ENCODE measurements at regions of chr16 and their contacts with region 1.

Region 1: DNA sequence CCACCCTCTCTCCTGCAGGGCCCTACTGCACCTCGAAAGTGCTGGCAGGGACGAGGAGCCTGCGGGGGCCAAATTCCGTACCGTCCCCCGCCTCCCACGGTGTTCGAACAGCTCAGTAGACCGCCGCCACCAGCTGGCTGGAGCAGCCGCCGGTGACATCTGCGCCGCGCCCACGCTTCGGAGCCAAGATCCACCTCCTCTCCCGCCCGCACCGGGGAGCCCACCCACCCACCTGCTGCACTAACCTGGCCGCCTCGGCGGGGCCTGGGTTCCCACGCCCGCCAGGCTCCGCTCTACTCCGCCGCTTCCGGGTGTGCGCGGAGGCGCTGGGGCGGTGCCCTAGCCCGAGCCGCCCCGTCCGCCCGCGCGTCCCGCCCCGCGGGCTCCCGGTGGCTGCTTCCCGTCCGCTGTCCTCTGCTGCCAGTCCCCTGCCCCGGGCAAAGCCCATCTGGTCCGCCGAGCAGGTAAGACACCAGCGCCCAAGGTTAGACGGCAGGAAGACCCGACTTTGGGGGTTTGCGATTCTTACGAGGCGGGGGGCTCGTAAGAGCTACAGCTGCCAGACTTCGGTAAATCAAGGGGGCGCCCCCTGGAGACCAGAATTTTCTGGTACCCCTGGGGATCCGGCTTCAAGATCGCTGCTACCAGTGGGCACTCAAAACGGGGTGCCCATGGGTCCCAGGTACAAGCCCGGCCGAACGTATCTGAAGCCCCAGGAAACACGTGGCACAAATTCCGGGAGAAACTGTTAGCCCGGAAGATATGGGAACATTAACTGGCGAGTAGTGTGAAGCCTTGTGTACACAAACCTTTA is at the starts of genes FBXL8 and TRADD:
- DNase-seq: peak; percentile 86
- H3K4me3 ChIP-seq: peak within 1 kb of the TSS; percentile 68 to 92 (median 75)
- H3K27ac ChIP-seq: peak within 1 kb of the TSS; percentile 77 to 79 (median 78)
- H3K4me1 ChIP-seq: peaks cover 0 to 69% (median 67%) of the 10 kb centered on the region in 4 donors
- H3K27me3 ChIP-seq: peaks cover 20 to 50% (median 34%) of the 10 kb centered on the region in 3 donors
- CTCF ChIP-seq: peak in 1 of 4 experiments; percentile 15
- EP300 ChIP-seq: no peak
- POLR2A ChIP-seq: peak; percentile 12 to 16
- total RNA-seq, gene FBXL8: 7.5 to 11.8 (median 9.7) TPM
- total RNA-seq, gene TRADD: 16.1 to 23.2 (median 19.6) TPM

Region 2: GRCh38 chr16:66894948-66895688 is 264.7 kb before region 1 on chr16:
- intact Hi-C with region 1: loop called (anchors 10 kb)
- DNase-seq: peak; percentile 82
- H3K4me3 ChIP-seq: no peak overlapping the region
- H3K27ac ChIP-seq: no peak overlapping the region
- H3K4me1 ChIP-seq: peaks cover 0 to 31% (median 28%) of the 10 kb centered on the region in 4 donors
- H3K27me3 ChIP-seq: no peaks in the 10 kb centered on the region
- CTCF ChIP-seq: peak; percentile 63 to 83 (median 79)
- EP300 ChIP-seq: no peak
- POLR2A ChIP-seq: no peak

Region 3: DNA sequence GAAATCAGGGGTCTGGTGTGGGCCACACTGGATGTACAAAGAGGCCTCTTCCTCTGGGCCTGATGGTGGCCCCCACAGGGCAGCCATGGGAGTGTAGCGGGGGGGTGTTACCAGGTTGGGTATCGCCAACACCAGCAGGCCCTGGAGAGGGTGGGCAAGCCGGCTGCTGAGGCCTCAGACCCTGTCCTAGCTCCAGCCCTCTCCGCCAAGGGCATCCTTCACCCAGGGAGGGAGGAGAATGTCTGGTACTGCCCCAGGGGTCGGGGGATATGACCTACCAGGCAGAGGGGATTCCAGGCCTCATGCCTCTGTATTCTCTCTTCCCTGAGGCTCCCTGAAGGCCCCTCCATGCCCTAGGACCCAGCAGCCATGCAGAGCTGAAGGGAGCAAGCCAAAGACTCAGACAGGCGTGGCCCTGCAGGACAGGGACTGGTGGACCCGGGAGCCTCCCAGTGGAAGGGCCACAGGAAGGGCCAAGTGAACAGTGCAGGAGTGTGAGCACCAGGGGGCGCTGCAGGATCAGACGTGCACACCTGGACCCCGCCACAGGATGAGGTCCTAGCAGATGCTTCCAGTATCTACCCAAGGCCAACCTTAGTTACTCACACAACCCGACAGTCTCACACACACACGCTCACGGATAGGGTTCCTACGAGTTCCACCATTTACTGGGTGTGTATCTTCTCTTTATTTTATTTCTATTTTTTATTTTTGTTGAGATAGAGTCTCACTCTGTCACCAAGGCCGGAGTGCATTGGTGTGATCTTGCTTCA is 182.3 kb before region 1 on chr16:
- intact Hi-C with region 1: loop called (anchors 1 kb)
- DNase-seq: peak; percentile 94
- H3K4me3 ChIP-seq: no peak overlapping the region
- H3K27ac ChIP-seq: no peak overlapping the region
- H3K4me1 ChIP-seq: no peaks in the 10 kb centered on the region
- H3K27me3 ChIP-seq: peaks cover 0 to 7% (median 0%) of the 10 kb centered on the region in 3 donors
- CTCF ChIP-seq: peak; percentile 92 to 99 (median 96)
- EP300 ChIP-seq: no peak
- POLR2A ChIP-seq: no peak

Region 4: DNA sequence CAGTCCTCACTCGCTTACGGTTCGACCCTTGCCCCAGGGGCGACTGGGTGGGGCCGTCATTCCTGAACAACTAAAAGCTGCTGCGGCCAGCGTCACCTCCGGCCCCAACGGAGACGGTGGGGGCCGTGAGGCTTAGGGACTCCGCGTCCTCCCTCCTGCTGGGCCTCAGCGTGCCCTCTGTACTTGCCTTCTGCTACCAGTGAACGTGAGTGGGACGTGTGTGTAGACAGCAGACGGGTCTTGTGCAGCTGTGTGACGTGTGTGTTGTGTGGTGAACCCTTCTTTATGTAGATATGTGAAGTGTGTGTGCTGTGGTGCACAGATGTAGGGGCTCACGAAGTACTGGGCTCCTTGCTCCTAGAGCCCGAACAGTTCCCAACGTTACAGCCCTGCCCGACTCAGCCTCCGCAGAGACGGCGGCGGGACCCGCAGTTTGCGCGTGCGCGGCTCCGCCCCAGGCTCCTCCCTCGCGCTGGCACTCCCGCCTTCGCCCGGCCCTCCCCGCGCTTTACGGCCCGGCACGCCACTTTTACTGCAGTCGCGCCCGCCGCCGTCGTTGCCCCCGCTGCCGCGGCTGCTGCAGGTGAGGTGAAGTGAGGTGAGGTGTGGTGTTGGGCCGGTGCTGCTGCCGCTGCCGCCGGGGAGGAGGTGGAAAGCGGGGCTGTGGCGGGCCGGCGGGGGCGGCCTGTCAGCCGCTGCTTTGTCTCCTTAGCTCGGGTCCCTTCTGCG is 50.2 kb before region 1 on chr16 and contains the start of gene PHAF1:
- intact Hi-C with region 1: loop called (anchors 5 kb)
- DNase-seq: peak; percentile 95
- H3K4me3 ChIP-seq: peak within 1 kb of the TSS; percentile 87 to 98 (median 90)
- H3K27ac ChIP-seq: peak within 1 kb of the TSS; percentile 77 to 88 (median 82)
- H3K4me1 ChIP-seq: peaks cover 0 to 27% (median 21%) of the 10 kb centered on the region in 4 donors
- H3K27me3 ChIP-seq: no peaks in the 10 kb centered on the region
- CTCF ChIP-seq: no peak
- EP300 ChIP-seq: no peak
- POLR2A ChIP-seq: peak; percentile 58 to 77
- total RNA-seq, gene PHAF1: 11.4 to 16.3 (median 14.0) TPM

Region 5: DNA sequence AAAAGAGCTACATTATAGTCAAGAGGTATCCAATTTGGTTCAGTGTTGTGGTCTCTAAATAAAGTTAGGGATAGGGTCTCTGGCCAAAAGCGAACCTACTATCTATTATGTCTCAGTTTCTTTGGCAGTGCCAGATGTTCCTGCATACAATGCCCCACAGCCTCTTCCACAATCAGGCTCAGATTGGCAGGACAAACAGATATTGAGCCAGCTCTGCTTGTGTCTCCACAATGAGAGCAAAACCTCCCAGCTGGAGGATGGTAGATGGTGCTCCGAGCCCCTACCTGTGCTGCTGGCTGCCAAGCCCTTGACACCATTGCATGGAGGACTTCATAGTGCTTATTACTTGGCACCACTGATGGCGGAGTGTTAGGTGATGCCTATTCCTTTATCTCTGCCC is 30.4 kb before region 1 on chr16:
- intact Hi-C with region 1: no loop called
- DNase-seq: no peak
- H3K4me3 ChIP-seq: no peak overlapping the region
- H3K27ac ChIP-seq: no peak overlapping the region
- H3K4me1 ChIP-seq: no peaks in the 10 kb centered on the region
- H3K27me3 ChIP-seq: no peaks in the 10 kb centered on the region
- CTCF ChIP-seq: no peak
- EP300 ChIP-seq: no peak
- POLR2A ChIP-seq: no peak

Region 6: GRCh38 chr16:67183627-67184328 is 24.0 kb after region 1 on chr16 and contains the start of gene MATCAP1:
- intact Hi-C with region 1: loop called (anchors 1 kb)
- DNase-seq: peak; percentile 98
- H3K4me3 ChIP-seq: peak within 1 kb of the TSS; percentile 68 to 79 (median 73)
- H3K27ac ChIP-seq: peak within 1 kb of the TSS; percentile 91 to 96 (median 94)
- H3K4me1 ChIP-seq: peaks cover 0 to 39% (median 33%) of the 10 kb centered on the region in 4 donors
- H3K27me3 ChIP-seq: no peaks in the 10 kb centered on the region
- CTCF ChIP-seq: no peak
- EP300 ChIP-seq: peak in 2 of 4 donors; percentile 41 to 55
- POLR2A ChIP-seq: peak in 1 of 2 donors; percentile 41
- total RNA-seq, gene MATCAP1: 6.6 to 22.2 (median 9.7) TPM

Measured in sigmoid colon (tissue), 7 donors.